Activated B cell treated with CpG ODN at 0.5 μM for 24 hours (primary cell): ENCODE measurements at regions of chr13 and their contacts with region 1.

Region 1: DNA sequence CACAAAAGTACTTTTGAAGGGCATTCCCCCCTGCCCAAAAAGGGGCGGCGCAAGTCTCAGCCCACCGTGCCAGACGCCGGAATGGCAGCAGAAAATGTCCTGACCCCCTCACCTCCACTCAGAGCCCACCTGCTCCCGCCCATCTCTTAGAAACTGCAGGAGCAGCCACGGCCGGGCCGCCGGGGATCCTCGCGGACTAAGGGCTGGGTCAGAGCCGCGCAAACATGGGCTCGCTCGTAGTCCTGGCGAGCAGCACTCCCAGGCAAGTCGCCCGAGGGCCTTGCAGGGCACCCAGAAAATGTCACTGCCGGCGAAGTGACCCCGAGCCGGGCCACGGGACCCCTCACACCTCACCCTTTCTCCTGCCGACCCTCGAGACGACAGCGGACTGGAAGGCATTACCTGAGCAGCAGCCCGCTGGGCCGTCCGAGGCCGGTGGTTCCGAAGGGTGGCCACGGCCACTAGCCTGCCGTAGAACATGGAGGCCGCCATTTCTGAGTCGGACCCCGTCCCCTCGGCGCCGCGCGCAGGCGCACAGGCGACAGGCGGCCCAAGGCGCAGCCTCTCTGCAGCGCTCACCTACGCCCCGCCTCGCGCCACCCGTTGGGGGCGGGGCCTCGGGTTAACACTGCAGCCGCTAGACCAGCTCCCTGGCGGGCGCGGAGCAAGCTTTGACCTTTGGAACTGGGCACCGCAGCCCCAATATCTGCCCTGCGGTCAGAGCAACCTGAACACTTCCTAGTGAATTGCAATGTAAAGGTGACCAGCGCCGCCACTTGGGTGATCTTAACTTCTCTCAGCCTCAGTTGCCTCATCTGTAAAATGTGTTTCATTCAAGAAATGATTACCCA is at the start of gene SUCLA2:
- DNase-seq: peak; percentile 88
- ATAC-seq: peak; percentile 100
- H3K4me3 Mint-ChIP-seq: peak within 1 kb of the TSS; percentile 95
- H3K27ac Mint-ChIP-seq: peak within 1 kb of the TSS; percentile 74
- H3K4me1 Mint-ChIP-seq: peaks cover 28% of the 10 kb centered on the region
- H3K27me3 Mint-ChIP-seq: no peaks in the 10 kb centered on the region
- CTCF ChIP-seq: no peak
- total RNA-seq, gene SUCLA2: 32.1 and 35.8 TPM in 2 replicates

Region 2: DNA sequence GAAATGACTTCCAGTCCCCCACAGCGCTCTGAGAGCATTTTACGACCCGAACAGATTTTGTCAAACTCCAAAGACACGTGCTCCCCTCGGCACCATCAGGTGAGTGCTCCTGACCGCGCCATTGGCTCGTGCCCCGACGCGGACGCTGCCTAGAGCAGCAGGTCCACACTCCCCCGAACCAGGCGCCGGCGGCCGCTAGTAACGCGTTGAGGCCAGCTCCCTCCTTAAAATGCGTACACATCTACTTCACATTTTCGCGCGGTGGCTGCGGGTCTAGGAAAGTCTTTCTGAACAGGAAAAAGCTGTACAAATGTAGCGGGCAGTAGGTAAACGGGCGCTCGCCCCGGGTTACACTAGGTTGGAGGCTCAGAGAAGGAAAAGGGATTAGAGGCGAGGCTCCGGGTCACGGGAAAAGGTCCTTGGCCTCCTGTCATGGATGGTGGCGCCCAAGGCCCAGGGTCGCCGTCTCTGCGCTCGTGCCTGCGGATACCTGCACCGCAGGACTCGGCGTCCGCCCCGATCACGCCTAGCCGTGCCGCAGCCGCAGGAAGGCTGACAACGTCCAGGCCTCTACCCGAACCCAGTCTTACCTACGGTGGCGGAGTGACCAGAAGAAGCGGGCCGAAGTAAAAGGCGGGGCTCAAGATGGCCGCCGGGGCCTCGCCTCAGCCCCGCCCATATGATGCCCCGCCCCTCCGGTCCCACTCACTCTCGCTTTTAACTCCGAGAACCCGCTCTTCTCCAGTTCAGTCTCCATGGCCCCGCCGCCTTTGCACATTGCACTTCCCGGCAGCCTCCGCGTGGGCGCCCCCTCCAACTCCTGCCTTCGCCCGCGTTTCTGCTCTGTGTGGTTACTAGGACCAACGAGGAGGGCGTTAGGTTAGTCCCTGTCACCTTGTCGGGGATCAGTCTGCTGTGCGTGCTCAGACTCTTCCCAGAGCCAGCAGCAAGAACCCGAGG is 1204.2 kb before region 1 on chr13 and contains the start of gene ESD:
- CTCF ChIA-PET with region 1: no interaction called
- POLR2A ChIA-PET with region 1: no interaction called
- intact Hi-C with region 1: loop called (anchors 2 kb)
- DNase-seq: peak; percentile 86
- ATAC-seq: peak; percentile 95
- H3K4me3 Mint-ChIP-seq: peak within 1 kb of the TSS; percentile 97
- H3K27ac Mint-ChIP-seq: peak within 1 kb of the TSS; percentile 96
- H3K4me1 Mint-ChIP-seq: peaks cover 38% of the 10 kb centered on the region
- H3K27me3 Mint-ChIP-seq: no peaks in the 10 kb centered on the region
- CTCF ChIP-seq: no peak
- total RNA-seq, gene ESD: 73.5 and 74.2 TPM in 2 replicates

Region 3: GRCh38 chr13:47903836-47904235 is 97.2 kb before region 1 on chr13:
- CTCF ChIA-PET with region 1: no interaction called
- POLR2A ChIA-PET with region 1: interaction called, 10 read pairs
- intact Hi-C with region 1: no loop called
- DNase-seq: no peak
- ATAC-seq: no peak
- H3K4me3 Mint-ChIP-seq: peak overlapping the region; percentile 39
- H3K27ac Mint-ChIP-seq: no peak overlapping the region
- H3K4me1 Mint-ChIP-seq: no peaks in the 10 kb centered on the region
- H3K27me3 Mint-ChIP-seq: no peaks in the 10 kb centered on the region
- CTCF ChIP-seq: no peak

Region 4: GRCh38 chr13:48018625-48019024 is 17.6 kb after region 1 on chr13:
- CTCF ChIA-PET with region 1: no interaction called
- POLR2A ChIA-PET with region 1: no interaction called
- intact Hi-C with region 1: no loop called
- DNase-seq: no peak
- ATAC-seq: no peak
- H3K4me3 Mint-ChIP-seq: no peak overlapping the region
- H3K27ac Mint-ChIP-seq: no peak overlapping the region
- H3K4me1 Mint-ChIP-seq: no peaks in the 10 kb centered on the region
- H3K27me3 Mint-ChIP-seq: no peaks in the 10 kb centered on the region
- CTCF ChIP-seq: no peak